ENCODE measurements at regions of chr7 and their contacts with region 1.

Region 1: GRCh38 chr7:82319674-82320118 is 123.9 kb downstream of the CACNA2D1 start:
- DNase-seq: no peak
- H3K4me3 ChIP-seq: no peak overlapping the region
- H3K27ac ChIP-seq: no peak overlapping the region
- H3K4me1 ChIP-seq: no peaks in the 10 kb centered on the region
- H3K27me3 ChIP-seq: no peaks in the 10 kb centered on the region
- CTCF ChIP-seq: no peak
- POLR2A ChIP-seq: no peak

Region 2: DNA sequence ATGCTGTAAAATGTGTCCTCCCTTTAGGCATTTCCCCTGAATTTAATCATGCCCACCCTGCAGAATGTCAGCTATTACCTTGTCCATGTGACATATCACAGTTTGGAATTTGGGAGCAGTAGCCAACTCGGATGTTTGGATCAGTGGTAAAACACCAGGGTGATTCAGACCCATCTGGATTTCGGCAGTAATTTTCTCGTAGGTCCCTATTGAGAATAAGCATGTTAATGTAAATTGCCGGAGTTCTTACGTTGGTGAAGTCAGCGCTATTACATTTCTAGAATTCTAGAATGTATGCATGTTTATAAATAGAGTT is 593.9 kb before region 1 on chr7:
- intact Hi-C with region 1: no loop called
- DNase-seq: no peak
- H3K4me3 ChIP-seq: no peak overlapping the region
- H3K27ac ChIP-seq: no peak overlapping the region
- H3K4me1 ChIP-seq: no peaks in the 10 kb centered on the region
- H3K27me3 ChIP-seq: no peaks in the 10 kb centered on the region
- CTCF ChIP-seq: no peak
- POLR2A ChIP-seq: no peak

Region 3: DNA sequence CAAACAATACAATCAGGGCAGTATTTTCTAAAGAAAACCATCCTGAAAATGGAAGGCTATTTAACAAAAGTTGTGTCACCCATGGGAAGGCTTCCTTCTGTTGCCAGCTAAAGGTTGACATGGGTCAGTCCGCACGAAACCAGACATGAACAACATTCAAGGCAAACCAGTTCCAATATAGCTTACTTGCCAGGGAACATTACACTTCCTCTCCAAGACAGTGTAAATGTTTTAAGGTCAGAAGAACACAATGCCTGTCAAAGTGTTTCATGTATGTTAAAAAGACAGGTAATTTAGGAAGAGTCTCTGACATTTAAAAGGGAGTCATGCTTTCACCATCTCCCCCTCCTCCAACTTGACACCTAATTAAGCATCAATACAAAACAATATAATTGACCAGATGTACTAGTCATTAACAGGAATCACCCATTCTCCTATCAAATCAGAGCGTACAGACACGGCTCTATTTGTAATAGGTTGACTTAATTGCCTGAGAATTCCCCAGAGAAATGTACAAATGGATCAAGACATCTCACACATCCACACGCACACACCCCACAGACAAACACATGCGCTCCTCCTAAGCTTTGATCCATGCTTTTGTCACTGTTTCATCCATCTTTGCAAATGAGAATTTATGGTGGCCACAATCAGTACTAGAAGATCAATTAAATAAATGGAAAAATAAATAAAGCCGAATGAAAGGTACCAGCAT is 54.4 kb after region 1 on chr7:
- intact Hi-C with region 1: loop called (anchors 10 kb)
- DNase-seq: no peak
- H3K4me3 ChIP-seq: no peak overlapping the region
- H3K27ac ChIP-seq: no peak overlapping the region
- H3K4me1 ChIP-seq: no peaks in the 10 kb centered on the region
- H3K27me3 ChIP-seq: no peaks in the 10 kb centered on the region
- CTCF ChIP-seq: no peak
- POLR2A ChIP-seq: no peak